ENCODE measurements at regions of chr9 and their contacts with region 1.

Region 1: DNA sequence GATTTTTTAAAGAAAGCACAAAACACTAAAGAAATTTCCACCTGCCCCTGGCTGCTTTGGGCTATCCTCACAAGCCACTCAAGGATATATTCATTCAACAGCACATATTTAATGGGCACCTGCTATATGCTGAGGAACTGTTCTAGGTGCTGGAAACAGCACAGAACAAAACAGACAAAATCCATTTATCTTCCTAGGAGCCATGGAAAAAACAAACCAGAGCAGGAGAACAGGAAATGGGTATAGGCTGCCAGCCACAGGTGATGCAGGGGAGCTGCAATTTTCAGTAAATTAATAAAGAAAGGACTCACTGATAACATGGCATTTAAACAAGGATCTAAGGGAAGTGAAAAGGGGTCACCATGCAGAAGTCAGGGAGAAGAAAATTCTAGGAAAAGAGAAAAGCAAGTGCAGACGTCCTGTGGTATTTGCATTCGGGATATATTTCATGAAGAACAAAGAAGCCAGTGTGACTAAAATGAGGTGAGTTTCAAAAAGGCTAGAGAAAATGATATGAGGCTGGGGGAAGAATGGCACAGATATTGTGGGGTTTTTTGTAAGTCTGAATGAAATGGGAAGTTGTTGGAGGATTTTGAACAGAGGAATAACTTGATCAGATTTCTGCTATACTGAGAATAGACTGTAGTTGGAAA is 152.2 kb downstream of the ADAMTSL1 start:
- DNase-seq: no peak
- H3K4me3 ChIP-seq: no peak overlapping the region
- H3K27ac ChIP-seq: no peak overlapping the region
- H3K27me3 ChIP-seq: no peaks in the 10 kb centered on the region
- CTCF ChIP-seq: peak in 2 of 56 donors; percentile 46 to 64

Region 2: GRCh38 chr9:18250053-18250452 is 376.1 kb before region 1 on chr9:
- intact Hi-C with region 1: loop called in 1 of 2 experiments (anchors 5 kb)
- DNase-seq: no peak
- H3K4me3 ChIP-seq: no peak overlapping the region
- H3K27ac ChIP-seq: no peak overlapping the region
- H3K27me3 ChIP-seq: peaks cover 0 to 5% (median 0%) of the 10 kb centered on the region in 45 donors
- CTCF ChIP-seq: no peak